Gastrocnemius medialis (tissue), 4 donors: ENCODE measurements at regions of chr5 and their contacts with region 1.

Region 1: DNA sequence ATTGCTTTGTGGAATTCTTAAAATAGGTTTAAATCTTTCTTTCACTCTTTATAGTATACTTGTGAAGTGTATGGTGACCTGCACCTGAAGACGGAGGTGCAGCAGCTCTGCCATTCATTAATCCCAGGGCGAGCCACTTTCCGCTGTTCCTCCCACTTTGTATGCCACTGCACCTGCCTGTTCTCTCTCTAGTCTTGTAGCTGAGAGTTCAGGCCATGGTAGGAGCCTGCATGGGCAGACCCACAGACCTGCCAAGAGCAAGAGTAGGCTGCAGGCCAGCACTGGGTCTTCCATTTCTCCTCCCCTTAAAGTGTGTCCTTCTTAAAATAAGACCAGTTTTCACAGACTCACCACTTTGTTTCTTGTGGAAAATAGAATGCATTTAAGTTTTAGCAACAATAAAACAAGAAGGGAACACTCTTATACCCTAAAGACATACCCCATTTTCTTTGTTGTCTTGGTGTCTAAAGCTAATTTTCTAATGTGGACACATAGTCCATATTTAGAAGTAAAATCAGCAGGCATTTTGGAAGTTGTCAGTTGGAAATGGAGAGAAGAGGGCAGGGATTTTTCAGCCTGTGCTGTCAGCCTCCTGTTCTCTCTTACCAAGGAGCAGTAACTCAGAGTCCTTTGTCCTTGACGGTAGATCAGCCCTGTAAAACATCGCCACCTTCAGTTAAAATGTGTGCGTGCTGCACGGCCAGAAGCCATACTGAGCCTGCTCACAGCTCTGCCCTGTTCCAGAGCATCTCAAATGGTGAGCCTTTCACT is 103.2 kb downstream of the SNCAIP start:
- DNase-seq: no peak
- ATAC-seq: no peak
- H3K4me3 ChIP-seq: no peak overlapping the region
- H3K27ac ChIP-seq: no peak overlapping the region
- H3K4me1 ChIP-seq: no peaks in the 10 kb centered on the region
- H3K27me3 ChIP-seq: no peaks in the 10 kb centered on the region
- CTCF ChIP-seq: peak in 3 of 5 experiments; percentile 22 to 37 (median 27)
- POLR2A ChIP-seq: no peak

Region 2: DNA sequence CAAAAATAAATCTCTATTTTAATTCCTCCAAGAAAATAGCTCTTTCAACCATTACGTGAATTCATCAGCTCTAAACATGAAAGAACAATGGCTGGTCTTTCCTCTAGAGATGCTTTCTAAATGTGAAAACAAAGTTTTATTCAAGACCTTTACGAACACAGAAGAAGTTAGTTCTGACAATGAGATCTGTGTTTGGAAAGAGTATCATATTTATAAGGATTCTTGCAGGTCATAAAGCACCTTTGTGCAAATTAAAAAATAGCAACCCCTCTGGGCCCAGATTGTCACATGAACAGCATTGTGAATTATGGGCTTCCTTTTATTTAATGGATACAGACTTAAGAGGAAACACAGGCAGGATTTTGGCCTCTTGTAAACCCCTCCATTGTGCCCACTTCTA is 581.2 kb before region 1 on chr5:
- in situ Hi-C with region 1: no loop called
- intact Hi-C with region 1: no loop called
- DNase-seq: no peak
- ATAC-seq: no peak
- H3K4me3 ChIP-seq: no peak overlapping the region
- H3K27ac ChIP-seq: no peak overlapping the region
- H3K4me1 ChIP-seq: no peaks in the 10 kb centered on the region
- H3K27me3 ChIP-seq: no peaks in the 10 kb centered on the region
- CTCF ChIP-seq: no peak
- POLR2A ChIP-seq: no peak

Region 3: DNA sequence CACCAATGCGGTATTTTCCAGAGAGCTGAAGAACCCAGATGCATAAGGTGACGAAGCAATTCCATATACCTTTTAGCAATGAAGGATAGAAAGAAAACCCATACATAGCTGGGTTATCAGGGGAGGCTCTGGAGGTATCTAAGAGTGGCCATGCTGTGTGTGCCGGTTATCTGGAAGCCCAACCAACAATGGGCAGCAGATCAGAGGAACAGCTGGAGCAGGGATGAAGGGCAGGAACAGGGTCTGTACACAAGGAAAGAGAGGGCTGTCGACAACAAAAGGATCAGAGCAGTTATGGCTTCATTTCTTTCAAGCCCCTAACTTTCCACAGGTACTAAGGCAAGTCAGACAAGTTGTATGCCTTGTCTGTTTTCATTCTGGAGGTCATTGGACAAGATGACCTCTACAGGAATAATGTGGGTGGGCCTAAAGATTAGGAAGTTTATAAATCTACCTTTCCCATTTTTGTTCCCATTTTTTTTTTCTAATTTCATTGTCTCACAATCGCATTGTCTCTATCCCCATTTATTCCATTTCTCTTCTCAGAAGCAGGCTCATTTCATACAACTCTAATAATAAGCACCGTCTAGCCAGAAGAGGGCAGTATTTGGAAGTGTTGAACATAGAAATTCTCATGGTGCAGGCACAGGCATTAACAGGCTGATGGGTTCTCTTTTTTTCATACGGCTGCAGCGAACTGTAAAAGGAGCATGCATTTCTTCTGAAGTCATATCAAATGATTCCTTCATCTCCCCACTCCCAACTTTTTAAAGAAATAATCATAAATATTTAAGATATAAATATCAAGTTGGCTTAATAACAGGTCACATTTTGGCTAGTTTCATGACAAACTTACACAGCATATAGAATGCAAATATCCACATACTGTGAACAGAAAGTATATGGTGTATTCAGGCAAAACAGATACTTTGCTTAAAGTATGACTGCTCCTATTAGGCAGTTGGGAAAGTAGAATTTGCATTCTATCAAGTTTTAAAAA is 222.4 kb before region 1 on chr5:
- in situ Hi-C with region 1: loop called in 2 of 4 experiments (anchors 10 to 25 kb)
- intact Hi-C with region 1: loop called (anchors 10 kb)
- DNase-seq: no peak
- ATAC-seq: no peak
- H3K4me3 ChIP-seq: no peak overlapping the region
- H3K27ac ChIP-seq: no peak overlapping the region
- H3K4me1 ChIP-seq: no peaks in the 10 kb centered on the region
- H3K27me3 ChIP-seq: no peaks in the 10 kb centered on the region
- CTCF ChIP-seq: peak in 3 of 5 experiments; percentile 11 to 41 (median 20)
- POLR2A ChIP-seq: no peak

Region 4: GRCh38 chr5:122311961-122312590 is 103.1 kb before region 1 on chr5 and contains the start of gene SNCAIP:
- in situ Hi-C with region 1: no loop called
- intact Hi-C with region 1: loop called (anchors 10 kb)
- DNase-seq: no peak
- ATAC-seq: peak in 1 of 2 donors; percentile 42
- H3K4me3 ChIP-seq: peak within 1 kb of the TSS; percentile 51 to 62 (median 57)
- H3K27ac ChIP-seq: peak within 1 kb of the TSS in 1 of 4 donors; percentile 4
- H3K4me1 ChIP-seq: peaks cover 0 to 9% of the 10 kb centered on the region in 2 donors
- H3K27me3 ChIP-seq: peaks cover 12 to 42% (median 29%) of the 10 kb centered on the region in 3 donors
- CTCF ChIP-seq: no peak
- POLR2A ChIP-seq: no peak
- total RNA-seq, gene SNCAIP: 0.22 to 3.1 (median 0.53) TPM